ENCODE measurements at regions of chr6 and their contacts with region 1.

Region 1: GRCh38 chr6:31559958-31560696 is 12.0 kb upstream of the LTA start:
- DNase-seq: peak; percentile 67
- H3K4me3 Mint-ChIP-seq: peak overlapping the region; percentile 66
- H3K27ac Mint-ChIP-seq: peak overlapping the region; percentile 61
- H3K4me1 Mint-ChIP-seq: peaks cover 69% of the 10 kb centered on the region
- H3K27me3 Mint-ChIP-seq: peaks cover 30% of the 10 kb centered on the region

Region 2: DNA sequence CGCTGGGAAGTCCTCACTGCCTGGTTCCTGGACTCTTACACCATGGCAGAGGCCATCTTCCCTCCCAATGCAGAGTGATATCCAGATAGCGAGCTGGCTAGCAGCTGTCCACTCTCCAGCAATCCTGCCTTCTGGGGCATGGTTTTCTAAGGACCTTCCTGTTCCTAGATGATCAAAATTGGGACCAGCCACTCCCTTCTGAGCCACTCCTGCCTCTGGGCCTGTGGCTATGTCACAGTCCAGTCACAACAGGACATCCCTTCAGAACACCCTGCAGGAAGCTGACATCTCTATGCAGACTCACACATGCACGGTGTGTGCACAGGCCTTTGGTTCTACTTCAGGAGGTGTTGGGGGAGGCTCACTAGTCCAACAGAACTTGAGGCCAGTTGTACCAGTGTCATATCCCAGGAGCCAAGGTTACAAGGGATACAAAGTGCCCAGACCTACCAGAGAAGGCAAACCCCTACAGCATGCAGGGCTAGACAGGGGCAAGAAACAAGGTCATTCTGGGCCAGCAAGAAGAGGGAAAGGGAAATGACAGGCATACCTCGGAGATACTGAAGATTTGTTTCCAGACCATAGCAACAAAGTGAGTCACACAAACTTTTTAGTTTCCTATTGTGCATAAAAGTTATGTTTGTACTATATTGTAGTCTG is 34.1 kb before region 1 on chr6:
- CTCF ChIA-PET with region 1: no interaction called
- POLR2A ChIA-PET with region 1: no interaction called
- DNase-seq: no peak
- H3K4me3 Mint-ChIP-seq: no peak overlapping the region
- H3K27ac Mint-ChIP-seq: no peak overlapping the region
- H3K4me1 Mint-ChIP-seq: peaks cover 6% of the 10 kb centered on the region
- H3K27me3 Mint-ChIP-seq: peaks cover 4% of the 10 kb centered on the region

Region 3: DNA sequence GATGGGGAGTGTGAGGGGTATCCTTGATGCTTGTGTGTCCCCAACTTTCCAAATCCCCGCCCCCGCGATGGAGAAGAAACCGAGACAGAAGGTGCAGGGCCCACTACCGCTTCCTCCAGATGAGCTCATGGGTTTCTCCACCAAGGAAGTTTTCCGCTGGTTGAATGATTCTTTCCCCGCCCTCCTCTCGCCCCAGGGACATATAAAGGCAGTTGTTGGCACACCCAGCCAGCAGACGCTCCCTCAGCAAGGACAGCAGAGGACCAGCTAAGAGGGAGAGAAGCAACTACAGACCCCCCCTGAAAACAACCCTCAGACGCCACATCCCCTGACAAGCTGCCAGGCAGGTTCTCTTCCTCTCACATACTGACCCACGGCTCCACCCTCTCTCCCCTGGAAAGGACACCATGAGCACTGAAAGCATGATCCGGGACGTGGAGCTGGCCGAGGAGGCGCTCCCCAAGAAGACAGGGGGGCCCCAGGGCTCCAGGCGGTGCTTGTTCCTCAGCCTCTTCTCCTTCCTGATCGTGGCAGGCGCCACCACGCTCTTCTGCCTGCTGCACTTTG is 15.3 kb after region 1 on chr6 and contains the start of gene TNF:
- CTCF ChIA-PET with region 1: interaction called, 28 read pairs
- POLR2A ChIA-PET with region 1: interaction called, 1,578 read pairs
- DNase-seq: peak; percentile 91
- H3K4me3 Mint-ChIP-seq: peak within 1 kb of the TSS; percentile 94
- H3K27ac Mint-ChIP-seq: peak within 1 kb of the TSS; percentile 96
- H3K4me1 Mint-ChIP-seq: peaks cover 73% of the 10 kb centered on the region
- H3K27me3 Mint-ChIP-seq: peaks cover 2% of the 10 kb centered on the region
- total RNA-seq, gene TNF: 124 to 130 TPM

Region 4: GRCh38 chr6:31580807-31581433 is 20.8 kb after region 1 on chr6:
- CTCF ChIA-PET with region 1: interaction called, 28 read pairs
- POLR2A ChIA-PET with region 1: interaction called, 1,578 read pairs
- DNase-seq: peak; percentile 89
- H3K4me3 Mint-ChIP-seq: peak overlapping the region; percentile 91
- H3K27ac Mint-ChIP-seq: peak overlapping the region; percentile 94
- H3K4me1 Mint-ChIP-seq: peaks cover 58% of the 10 kb centered on the region
- H3K27me3 Mint-ChIP-seq: no peaks in the 10 kb centered on the region

Measured in activated CD4-positive, alpha-beta memory T cell treated with anti-CD3 and anti-CD28 coated beads, Interleukin-2, amount 10 ng/mL, durations not matched to agents 7 days and 5 days (primary cell).